ENCODE measurements at regions of chr4 and their contacts with region 1.

Region 1: GRCh38 chr4:114364857-114365256 is 233.8 kb upstream of the UGT8 start:
- ATAC-seq: no peak
- H3K4me3 ChIP-seq: no peak overlapping the region
- H3K27ac ChIP-seq: no peak overlapping the region
- H3K4me1 ChIP-seq: peaks cover 0 to 7% of the 10 kb centered on the region in 2 donors

Region 2: GRCh38 chr4:113952452-113953029 is 412.3 kb before region 1 on chr4:
- in situ Hi-C with region 1: loop called in 1 of 9 experiments (anchors 25 kb)
- ATAC-seq: peak in 4 of 8 experiments; percentile 40 to 93 (median 62)
- H3K4me3 ChIP-seq: no peak overlapping the region
- H3K27ac ChIP-seq: no peak overlapping the region
- H3K4me1 ChIP-seq: no peaks in the 10 kb centered on the region

Region 3: GRCh38 chr4:114180481-114180880 is 184.4 kb before region 1 on chr4:
- in situ Hi-C with region 1: loop called in 1 of 9 experiments (anchors 25 kb)
- ATAC-seq: peak in 4 of 8 experiments; percentile 31 to 82 (median 74)
- H3K4me3 ChIP-seq: no peak overlapping the region
- H3K27ac ChIP-seq: no peak overlapping the region
- H3K4me1 ChIP-seq: no peaks in the 10 kb centered on the region

Region 4: DNA sequence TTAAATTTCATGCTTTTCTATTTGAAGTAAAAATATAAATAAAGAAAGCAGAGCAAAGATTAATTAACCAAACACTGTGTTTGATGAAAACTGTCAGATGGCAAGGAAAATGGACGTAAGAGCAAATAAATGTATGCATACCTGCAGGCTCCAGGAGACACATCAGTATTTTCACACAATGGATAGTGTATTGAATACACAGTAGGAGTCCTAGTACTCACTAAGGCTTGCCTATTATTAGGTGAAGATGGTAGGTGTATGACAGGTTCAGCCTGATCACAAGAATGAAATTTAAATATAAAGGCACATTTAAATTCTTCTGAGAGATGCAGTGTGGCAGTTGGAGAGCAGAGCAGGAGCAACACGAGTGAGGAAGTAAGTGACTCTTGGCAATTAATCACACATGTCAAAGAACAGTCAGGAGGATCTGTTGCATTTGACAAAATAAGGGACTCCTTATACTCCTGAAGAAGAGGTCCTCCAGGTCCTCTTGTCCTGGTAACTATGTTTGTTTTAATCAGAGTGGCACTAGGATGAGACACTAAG is 854.5 kb after region 1 on chr4:
- in situ Hi-C with region 1: no loop called
- ATAC-seq: no peak
- H3K4me3 ChIP-seq: no peak overlapping the region
- H3K27ac ChIP-seq: no peak overlapping the region
- H3K4me1 ChIP-seq: peaks cover 0 to 4% of the 10 kb centered on the region in 2 donors

Measured in motor neuron (in vitro differentiated cells).